Dorsolateral prefrontal cortex (tissue), 120 donors: ENCODE measurements at regions of chr5 and their contacts with region 1.

Region 1: DNA sequence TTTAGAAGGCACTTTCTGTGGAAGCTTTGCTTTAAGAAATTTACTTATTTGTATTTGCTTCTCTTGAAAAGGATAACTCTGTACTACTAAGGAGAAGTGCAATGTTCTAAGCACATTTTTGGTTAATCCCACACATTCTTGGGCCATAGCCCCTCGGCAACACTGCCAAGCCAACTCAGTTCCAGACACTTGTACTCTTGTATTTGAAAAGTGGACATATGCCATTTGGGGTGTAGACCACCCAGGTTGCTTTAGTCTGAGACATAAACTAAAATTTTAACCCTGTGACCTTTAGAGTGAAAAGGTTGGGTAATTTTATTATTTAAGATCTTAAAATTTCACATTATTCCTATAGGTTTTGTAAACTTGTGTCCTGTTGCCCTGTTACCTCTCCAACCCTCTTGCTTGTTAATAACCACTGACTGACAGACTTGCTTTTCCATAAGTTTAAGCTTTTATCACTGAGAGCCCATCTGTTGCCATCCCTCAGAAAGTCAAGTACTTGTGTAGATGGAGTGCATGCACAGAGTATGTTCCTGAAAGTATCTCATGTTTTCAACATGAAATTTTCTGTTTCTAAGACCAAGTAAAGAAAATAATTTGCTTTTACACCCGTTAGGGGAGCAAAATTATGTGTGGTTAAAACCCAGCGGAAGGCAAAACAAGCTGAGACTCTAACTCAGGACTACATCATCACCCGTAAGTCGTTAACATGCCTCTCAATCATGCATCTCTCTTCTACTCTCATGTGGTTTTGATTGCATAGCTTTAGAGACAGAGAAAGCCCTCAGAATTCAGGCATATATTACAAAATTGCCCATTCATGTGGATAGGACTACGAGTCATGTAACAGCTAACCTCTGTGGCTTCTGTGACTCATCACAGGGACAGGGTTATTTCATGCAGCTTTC is 117.3 kb downstream of the GDNF start:
- DNase-seq: no peak
- H3K4me3 ChIP-seq: no peak overlapping the region
- H3K27ac ChIP-seq: peak overlapping the region in 1 of 59 donors; percentile 15
- H3K27me3 ChIP-seq: no peaks in the 10 kb centered on the region
- CTCF ChIP-seq: no peak

Region 2: DNA sequence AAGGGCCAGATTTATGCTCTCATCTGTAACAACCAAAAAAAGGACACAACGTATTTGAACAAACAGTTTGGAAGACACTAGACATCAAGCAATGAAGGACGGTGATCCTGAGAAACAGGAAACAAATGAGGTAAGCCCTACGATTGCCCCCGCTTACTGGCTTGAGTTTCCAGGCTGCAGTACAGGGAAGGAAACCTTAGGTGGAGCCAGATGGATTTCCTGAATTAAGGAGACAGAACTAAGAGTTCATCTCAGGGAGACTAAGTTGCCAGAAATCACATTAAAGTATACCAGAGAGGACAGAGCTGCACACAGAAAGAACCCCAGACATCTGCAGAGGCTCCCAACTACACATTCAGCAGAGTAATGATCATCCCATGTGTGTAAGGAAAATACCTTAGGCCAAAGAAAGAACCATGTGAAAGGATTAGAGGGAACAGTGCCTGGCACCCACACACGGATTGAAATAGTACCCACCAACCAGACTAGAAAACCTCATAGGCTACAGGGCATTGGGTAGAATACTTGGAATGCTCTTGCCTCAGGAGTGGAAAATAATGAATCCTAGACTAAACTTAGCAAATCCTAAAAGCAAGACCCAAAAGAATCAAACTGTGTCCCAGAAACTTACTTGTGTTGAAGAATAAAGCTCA is 945.3 kb before region 1 on chr5:
- intact Hi-C with region 1: no loop called
- DNase-seq: no peak
- H3K4me3 ChIP-seq: no peak overlapping the region
- H3K27ac ChIP-seq: no peak overlapping the region
- H3K27me3 ChIP-seq: peaks cover 0 to 5% (median 0%) of the 10 kb centered on the region in 45 donors
- CTCF ChIP-seq: peak in 36 of 56 donors; percentile 7 to 41 (median 24)

Region 3: GRCh38 chr5:37685213-37685612 is 37.3 kb before region 1 on chr5:
- intact Hi-C with region 1: no loop called
- DNase-seq: no peak
- H3K4me3 ChIP-seq: no peak overlapping the region
- H3K27ac ChIP-seq: no peak overlapping the region
- H3K27me3 ChIP-seq: no peaks in the 10 kb centered on the region
- CTCF ChIP-seq: no peak

Region 4: GRCh38 chr5:37767961-37768360 is 45.5 kb after region 1 on chr5:
- intact Hi-C with region 1: loop called in 1 of 2 experiments (anchors 5 kb)
- DNase-seq: peak in 2 of 10 donors; percentile 24 to 39
- H3K4me3 ChIP-seq: peak overlapping the region in 3 of 59 donors; percentile 9 to 20 (median 10)
- H3K27ac ChIP-seq: peak overlapping the region; percentile 22 to 97 (median 87)
- H3K27me3 ChIP-seq: no peaks in the 10 kb centered on the region
- CTCF ChIP-seq: peak in 3 of 56 donors; percentile 3 to 20 (median 10)

Region 5: GRCh38 chr5:37814699-37815098 is 92.2 kb after region 1 on chr5:
- intact Hi-C with region 1: loop called in 1 of 2 experiments (anchors 5 kb)
- DNase-seq: no peak
- H3K4me3 ChIP-seq: no peak overlapping the region
- H3K27ac ChIP-seq: no peak overlapping the region
- H3K27me3 ChIP-seq: peaks cover 0 to 8% (median 0%) of the 10 kb centered on the region in 45 donors
- CTCF ChIP-seq: no peak

Region 6: DNA sequence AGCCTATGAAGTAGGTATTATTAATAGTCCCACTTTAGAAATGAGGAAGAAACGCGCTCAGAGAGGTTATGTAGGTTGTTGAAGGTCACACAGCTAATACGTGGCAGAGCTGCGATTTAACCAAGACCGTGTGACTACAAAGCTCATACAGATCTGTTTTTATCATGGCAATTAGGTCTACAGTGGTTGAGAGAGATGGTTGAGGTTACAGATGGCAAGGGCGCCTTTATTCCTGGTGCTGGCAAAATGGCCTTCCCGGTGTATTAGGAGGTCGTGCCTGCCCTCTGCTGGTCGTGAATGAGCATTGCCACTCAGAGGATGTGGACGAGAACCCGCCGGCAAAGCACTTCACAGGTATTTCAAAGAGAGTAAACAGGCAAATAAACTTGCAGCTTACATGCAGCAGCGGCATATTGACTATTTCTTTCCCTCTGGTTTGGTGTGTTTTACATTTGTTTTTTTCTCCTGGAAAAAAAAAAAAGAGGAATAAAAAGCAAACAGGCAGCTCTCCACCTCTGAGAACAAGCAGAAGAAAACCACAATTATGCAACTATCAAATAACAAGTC is 470.6 kb after region 1 on chr5:
- intact Hi-C with region 1: loop called in 1 of 2 experiments (anchors 10 kb)
- DNase-seq: peak; percentile 68 to 85 (median 72)
- H3K4me3 ChIP-seq: no peak overlapping the region
- H3K27ac ChIP-seq: no peak overlapping the region
- H3K27me3 ChIP-seq: peaks cover 0 to 21% (median 3%) of the 10 kb centered on the region in 45 donors
- CTCF ChIP-seq: peak; percentile 73 to 98 (median 91)